H1 (cell line): ENCODE measurements at regions of chr12 and their contacts with region 1.

Region 1: GRCh38 chr12:49358483-49359141 is 8.7 kb upstream of the SPATS2 start:
- DNase-seq: peak in 1 of 2 experiments; percentile 67
- H3K4me3 ChIP-seq: no peak overlapping the region
- H3K27ac ChIP-seq: no peak overlapping the region
- H3K4me1 ChIP-seq: peaks cover 0 to 3% (median 0%) of the 10 kb centered on the region in 4 experiments; a peak in 1 of 7 replicates
- H3K27me3 ChIP-seq: no peaks in the 10 kb centered on the region
- CTCF ChIP-seq: peak; percentile 38 to 93 (median 79)
- EP300 ChIP-seq: no peak
- POLR2A ChIP-seq: no peak
- RAD21 ChIP-seq: peak; percentile 97

Region 2: GRCh38 chr12:48681738-48682532 is 676.7 kb before region 1 on chr12 and contains the start of gene KANSL2:
- CTCF ChIA-PET with region 1: no interaction called
- POLR2A ChIA-PET with region 1: no interaction called
- DNase-seq: peak; percentile 88 to 91
- H3K4me3 ChIP-seq: peak within 1 kb of the TSS; percentile 80 to 92 (median 86)
- H3K27ac ChIP-seq: peak within 1 kb of the TSS; percentile 96
- H3K4me1 ChIP-seq: peaks cover 0 to 3% (median under 1%) of the 10 kb centered on the region in 4 experiments; a peak in 3 of 7 replicates
- H3K27me3 ChIP-seq: no peaks in the 10 kb centered on the region
- CTCF ChIP-seq: no peak
- EP300 ChIP-seq: no peak
- POLR2A ChIP-seq: peak; percentile 99
- RAD21 ChIP-seq: no peak
- total RNA-seq, gene KANSL2: 46.1 and 48.4 TPM in 2 replicates

Region 3: DNA sequence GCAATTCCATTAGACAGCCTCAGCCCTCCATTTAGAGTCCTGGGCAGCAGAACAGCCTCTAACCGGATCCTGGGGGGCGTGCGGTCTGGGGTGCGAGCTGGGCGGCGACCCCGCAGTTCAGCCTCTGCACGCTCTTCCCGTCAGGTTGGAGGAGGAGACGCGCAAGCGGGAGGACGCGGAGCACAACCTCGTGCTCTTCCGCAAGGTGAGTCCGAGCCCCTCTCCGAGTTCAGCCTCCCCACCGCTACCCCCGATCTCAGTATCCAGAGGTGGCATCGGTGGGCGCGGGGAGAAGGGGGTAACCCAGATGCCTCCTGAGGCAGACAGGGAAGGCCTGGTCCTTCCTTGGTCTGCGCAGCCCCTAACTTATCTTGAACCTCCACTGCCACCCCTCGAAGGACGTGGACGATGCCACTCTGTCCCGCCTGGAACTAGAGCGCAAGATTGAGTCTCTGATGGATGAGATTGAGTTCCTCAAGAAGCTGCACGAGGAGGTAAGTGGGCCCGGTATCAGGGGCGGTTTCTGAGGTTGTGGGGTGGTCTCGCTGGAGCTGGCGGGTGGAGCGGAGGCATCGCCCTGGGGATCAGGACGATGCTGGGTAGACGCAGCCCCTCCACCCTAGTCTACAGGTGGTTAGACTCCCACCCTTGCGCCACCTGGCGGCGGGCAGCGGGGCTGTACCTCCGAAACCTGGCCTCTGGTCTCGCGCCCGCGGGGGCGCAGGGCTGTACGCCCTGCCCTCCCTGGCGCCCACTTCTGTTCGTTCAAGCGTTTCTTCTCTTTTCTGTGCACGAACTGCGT is 62.4 kb before region 1 on chr12:
- CTCF ChIA-PET with region 1: interaction called, 33 read pairs
- POLR2A ChIA-PET with region 1: no interaction called
- DNase-seq: peak in 1 of 2 experiments; percentile 91
- H3K4me3 ChIP-seq: peak overlapping the region; percentile 4 to 59 (median 34); a peak in 7 of 8 replicates
- H3K27ac ChIP-seq: no peak overlapping the region
- H3K4me1 ChIP-seq: peaks cover 0 to 36% (median 17%) of the 10 kb centered on the region in 4 experiments; a peak in 6 of 7 replicates
- H3K27me3 ChIP-seq: peaks cover 50 to 72% (median 68%) of the 10 kb centered on the region in 4 experiments
- CTCF ChIP-seq: peak in 2 of 3 experiments; percentile 89; a peak in 3 of 4 replicates
- EP300 ChIP-seq: no peak
- POLR2A ChIP-seq: no peak
- RAD21 ChIP-seq: peak; percentile 31 to 42; a peak in 2 of 4 replicates

Region 4: DNA sequence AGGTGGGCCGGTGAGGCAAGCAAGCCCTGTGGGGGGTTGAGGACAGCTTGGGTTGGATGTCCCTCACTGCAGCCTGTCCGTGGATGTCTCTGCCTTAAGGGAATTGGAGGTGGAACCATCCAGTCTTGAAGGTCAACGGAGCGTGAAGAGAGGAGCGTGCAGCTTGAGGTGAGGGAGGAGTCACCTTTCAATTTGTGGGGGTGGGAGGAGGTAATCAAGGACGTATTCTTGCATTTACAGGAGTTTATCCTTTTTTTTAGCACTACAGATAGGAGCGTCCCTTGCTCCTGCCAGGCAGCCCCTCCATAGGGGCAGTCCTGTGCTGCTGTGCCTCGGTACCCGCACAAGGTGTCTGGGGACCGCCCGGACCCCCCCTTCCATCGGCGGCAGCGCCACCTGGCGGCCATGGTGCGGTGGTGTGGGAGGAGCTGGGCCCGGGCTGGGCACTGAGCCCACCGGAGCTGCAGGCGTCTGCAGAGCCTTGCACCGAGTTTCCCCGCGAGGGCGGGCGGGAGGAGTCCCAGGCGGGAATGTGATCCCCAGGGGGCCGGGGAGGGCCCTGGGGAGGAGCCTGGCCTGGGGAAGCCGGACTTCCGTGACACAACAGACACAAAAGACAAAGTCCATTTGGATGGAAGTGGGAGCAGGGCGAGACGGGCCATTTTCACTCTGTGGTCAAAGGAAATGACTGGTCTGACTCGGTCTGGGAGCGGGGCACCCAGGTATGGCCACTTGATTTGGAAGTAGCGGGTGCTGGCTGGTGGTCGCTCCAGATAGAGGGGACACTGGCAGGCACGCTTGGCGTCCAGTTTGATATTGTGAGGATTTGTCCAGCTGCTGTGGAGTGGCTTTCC is 11.0 kb before region 1 on chr12:
- CTCF ChIA-PET with region 1: interaction called, 64 read pairs
- POLR2A ChIA-PET with region 1: interaction called, 6 read pairs
- DNase-seq: peak in 1 of 2 experiments; percentile 98
- H3K4me3 ChIP-seq: peak overlapping the region in 3 of 4 experiments; percentile 37 to 69 (median 38); a peak in 6 of 8 replicates
- H3K27ac ChIP-seq: no peak overlapping the region
- H3K4me1 ChIP-seq: peaks cover 4 to 22% (median 15%) of the 10 kb centered on the region in 4 experiments
- H3K27me3 ChIP-seq: peaks cover 49 to 72% (median 70%) of the 10 kb centered on the region in 4 experiments
- CTCF ChIP-seq: peak; percentile 78 to 93 (median 92)
- EP300 ChIP-seq: no peak
- POLR2A ChIP-seq: no peak
- RAD21 ChIP-seq: peak; percentile 39 to 56; a peak in 3 of 4 replicates

Region 5: DNA sequence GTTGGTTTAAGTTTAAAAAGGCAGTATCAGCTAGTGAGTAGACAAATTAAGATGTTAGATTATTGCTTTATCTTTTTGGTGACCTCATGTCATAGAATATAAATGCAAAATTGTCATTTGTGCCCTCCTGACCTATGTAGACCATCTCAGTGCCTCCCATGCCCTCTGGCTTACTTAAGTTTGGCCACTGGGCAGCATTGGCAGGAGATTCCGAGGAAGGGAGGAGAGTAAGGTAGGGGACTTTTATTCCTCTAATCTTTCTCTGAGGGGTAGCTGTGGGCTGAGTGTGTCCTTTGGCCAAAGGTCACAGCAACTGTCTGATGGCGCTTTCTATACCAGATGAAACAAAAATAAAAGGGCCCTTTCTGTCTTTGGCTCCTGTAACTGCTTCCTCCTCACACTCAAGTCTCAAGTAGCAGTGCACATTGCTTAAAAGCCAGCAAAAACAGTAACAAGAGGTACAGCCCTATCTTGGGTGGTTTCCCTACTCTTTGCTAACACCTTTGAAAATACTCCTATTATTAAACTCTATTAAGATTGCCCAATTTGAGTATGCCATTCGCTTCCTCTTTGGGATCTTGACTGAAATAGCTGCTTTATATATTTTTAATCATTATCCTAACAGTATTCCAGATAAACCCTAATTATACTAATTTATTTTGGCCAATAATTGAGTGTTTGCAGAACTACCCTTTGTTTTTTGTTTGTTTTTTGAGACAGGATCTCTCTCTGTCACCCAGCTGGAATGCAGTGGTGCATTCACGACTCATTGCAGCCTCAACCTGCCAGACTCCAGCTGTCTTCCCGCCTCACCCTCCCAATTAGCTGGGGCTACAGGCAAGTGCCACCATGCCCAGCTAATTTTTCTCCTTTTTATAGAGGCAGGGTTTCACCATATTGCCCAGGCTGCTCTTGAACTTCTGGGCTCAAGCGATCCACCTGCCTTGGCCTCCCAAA is 123.8 kb after region 1 on chr12:
- CTCF ChIA-PET with region 1: interaction called, 21 read pairs
- POLR2A ChIA-PET with region 1: no interaction called
- DNase-seq: no peak
- H3K4me3 ChIP-seq: no peak overlapping the region
- H3K27ac ChIP-seq: no peak overlapping the region
- H3K4me1 ChIP-seq: peaks cover 7 to 22% (median 15%) of the 10 kb centered on the region in 4 experiments
- H3K27me3 ChIP-seq: no peaks in the 10 kb centered on the region
- CTCF ChIP-seq: no peak
- EP300 ChIP-seq: no peak
- POLR2A ChIP-seq: no peak
- RAD21 ChIP-seq: no peak

Region 6: GRCh38 chr12:49538510-49539403 is 180.1 kb after region 1 on chr12 and contains the start of gene KCNH3:
- CTCF ChIA-PET with region 1: interaction called, 29 read pairs
- POLR2A ChIA-PET with region 1: no interaction called
- DNase-seq: peak in 1 of 2 experiments; percentile 76
- H3K4me3 ChIP-seq: peak within 1 kb of the TSS; percentile 29 to 56 (median 38)
- H3K27ac ChIP-seq: no peak within 1 kb of the TSS
- H3K4me1 ChIP-seq: peaks cover 0 to 25% (median 9%) of the 10 kb centered on the region in 4 experiments; a peak in 6 of 7 replicates
- H3K27me3 ChIP-seq: peaks cover 64 to 87% (median 84%) of the 10 kb centered on the region in 4 experiments
- CTCF ChIP-seq: no peak
- EP300 ChIP-seq: no peak
- POLR2A ChIP-seq: no peak
- RAD21 ChIP-seq: no peak
- total RNA-seq, gene KCNH3: 0.24 and 0.36 TPM in 2 replicates

Region 7: DNA sequence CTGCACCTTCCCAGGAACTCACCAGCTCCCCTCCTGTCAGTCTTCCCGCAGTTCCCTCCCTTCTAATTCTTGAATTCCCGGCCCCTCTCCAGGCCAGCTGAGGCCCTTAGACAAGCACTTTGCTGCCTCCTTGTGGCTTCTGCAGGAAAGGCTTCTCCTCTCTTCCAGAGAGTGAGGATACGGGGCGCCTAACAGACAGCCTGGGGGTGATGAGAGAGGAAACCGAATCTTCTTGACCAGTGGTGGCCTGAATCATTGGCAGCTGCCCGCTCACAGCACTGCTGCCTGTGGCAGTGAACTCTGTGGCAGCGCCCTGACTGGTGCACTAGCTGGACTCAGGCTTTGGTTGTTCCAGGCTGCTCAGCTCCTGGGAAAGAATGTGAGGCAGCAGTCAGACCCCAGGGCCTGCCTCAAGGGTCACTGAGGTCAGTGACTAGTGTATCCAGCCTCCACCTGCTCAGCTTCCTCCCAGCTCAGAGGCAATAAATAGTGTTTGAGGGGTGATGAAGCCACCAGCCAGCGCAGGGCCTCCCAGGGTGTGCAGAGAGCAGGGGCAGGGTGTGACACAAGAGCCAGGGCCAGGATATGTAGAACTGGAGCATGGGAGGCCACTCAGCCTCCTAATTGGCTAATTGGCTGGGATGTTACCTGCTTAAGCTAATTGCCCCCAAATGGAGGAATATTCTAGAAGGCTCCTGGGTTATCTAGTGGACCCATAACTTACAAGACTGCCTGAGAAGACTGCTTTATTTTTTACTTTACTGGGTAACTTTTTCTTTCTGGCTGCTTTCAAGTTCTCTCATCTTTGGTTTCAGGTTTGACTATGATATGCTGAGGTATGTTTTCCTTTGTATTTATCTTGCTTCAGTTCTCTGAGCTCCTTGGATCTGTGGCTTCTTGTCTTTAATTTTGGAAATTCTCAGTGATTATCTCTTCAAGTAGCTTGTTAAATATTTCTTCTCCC is 222.2 kb after region 1 on chr12:
- CTCF ChIA-PET with region 1: interaction called, 48 read pairs
- POLR2A ChIA-PET with region 1: no interaction called
- DNase-seq: peak; percentile 77 to 92
- H3K4me3 ChIP-seq: no peak overlapping the region
- H3K27ac ChIP-seq: no peak overlapping the region
- H3K4me1 ChIP-seq: peaks cover 0 to 6% (median 4%) of the 10 kb centered on the region in 4 experiments; a peak in 4 of 7 replicates
- H3K27me3 ChIP-seq: no peaks in the 10 kb centered on the region
- CTCF ChIP-seq: peak; percentile 74 to 97 (median 94)
- EP300 ChIP-seq: no peak
- POLR2A ChIP-seq: no peak
- RAD21 ChIP-seq: peak; percentile 88